ENCODE measurements at regions of chr9 and their contacts with region 1.

Region 1: DNA sequence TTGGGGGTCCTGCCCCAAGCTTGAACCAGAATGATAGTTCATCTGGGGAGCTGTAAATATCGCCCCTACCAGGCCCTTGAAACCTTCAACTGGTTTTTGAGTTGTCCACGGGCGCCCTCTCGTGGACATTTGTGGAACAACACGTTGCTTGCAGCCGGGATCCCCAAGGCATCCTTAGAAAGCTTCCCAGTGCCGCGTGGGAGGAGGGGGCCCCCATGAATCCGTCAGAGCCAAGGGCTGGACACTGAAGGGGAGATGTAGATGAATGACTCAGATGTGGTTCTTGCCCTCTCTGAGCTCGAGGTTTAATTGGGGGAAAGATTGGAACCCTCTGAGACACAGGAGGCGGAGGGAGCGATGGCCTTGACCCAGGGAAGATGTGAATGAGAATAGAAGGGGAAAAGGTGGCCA is 31.8 kb upstream of the ORM1 start:
- DNase-seq: no peak
- H3K4me3 ChIP-seq: no peak overlapping the region
- CTCF ChIP-seq: peak; percentile 74

Region 2: GRCh38 chr9:114082017-114082762 is 208.9 kb before region 1 on chr9:
- CTCF ChIA-PET with region 1: interaction called, 176 read pairs
- POLR2A ChIA-PET with region 1: no interaction called
- DNase-seq: peak; percentile 41
- H3K4me3 ChIP-seq: no peak overlapping the region
- CTCF ChIP-seq: peak; percentile 85

Region 3: DNA sequence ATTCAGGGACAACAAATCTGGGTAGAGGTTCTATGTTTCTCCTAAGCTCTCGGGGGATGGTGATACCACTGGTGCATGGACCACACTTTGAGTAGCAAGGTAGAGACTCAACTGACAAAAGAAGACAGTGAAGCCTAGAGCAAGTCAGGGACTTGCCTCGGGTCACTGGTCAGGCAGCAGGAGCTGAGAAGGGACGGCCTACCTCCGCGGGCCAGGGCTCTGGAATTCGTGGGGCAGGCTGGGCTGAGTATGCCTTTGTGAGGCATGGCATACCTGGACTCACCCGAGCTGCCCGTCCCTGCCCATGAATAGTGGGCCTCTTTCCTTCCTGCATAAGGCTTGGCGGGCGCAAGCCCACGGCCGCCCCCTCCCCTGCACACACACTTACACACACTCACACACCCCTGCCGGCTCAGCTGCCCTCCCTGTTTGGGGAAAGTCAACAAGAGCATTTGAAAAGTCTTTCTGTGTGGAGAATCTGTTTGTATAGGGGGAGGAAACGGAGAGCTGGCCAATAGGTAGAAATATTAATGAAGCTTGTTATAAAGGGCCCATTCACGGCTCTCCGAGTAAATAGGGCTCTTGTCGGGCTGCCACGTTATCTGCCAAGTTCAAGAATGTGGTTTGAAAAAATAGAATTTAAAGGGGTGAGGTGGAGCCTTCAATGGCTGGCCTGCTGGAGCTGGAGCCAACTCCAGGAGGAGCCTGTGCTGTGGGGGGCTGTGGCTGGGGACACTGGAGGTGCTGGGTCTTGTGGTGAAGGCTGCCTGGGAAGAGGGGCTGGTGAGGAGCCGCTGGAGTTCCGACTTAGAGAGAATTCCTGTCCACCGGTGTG is 172.9 kb before region 1 on chr9:
- CTCF ChIA-PET with region 1: interaction called, 686 read pairs
- POLR2A ChIA-PET with region 1: no interaction called
- DNase-seq: no peak
- H3K4me3 ChIP-seq: no peak overlapping the region
- CTCF ChIP-seq: no peak

Region 4: DNA sequence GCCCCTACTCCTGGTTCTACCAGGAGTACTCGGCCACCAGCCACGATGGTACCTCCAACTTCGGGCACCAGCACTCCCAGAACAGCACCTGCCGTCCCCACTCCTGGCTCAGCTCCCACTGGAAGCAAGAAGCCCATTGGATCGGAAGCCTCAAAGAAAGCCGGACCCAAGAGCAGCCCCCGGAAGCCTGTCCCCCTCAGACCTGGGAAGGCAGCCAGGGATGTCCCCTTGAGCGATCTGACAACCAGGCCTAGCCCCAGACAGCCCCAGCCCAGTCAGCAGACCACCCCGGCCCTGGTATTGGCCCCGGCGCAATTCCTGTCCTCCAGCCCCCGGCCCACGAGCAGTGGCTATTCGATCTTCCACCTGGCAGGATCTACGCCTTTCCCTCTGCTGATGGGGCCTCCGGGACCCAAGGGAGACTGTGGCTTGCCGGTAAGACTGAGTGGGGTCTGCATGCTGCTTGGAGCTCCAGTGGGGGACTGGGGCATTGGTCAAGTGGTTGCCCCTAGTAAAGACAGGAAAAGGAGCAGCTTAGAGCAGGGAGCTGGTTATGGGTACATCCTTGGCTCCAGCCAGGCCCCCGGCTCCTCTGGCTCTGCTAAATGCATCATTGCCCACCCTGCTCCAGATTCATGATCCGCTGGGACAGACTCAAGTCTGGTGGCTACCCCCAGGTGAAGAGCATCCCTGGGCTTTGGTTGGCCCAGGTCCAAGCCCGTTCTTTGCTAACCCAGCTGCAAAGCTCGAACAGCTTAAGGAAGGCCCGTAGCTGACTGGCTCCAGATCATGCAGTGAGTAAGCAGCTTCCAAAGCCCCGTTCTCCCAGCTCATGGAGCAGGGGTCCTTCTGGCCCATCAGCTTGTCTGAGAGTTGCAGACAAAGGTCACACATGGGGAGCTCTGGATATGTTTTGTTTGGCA is 121.8 kb before region 1 on chr9:
- CTCF ChIA-PET with region 1: interaction called, 280 read pairs
- POLR2A ChIA-PET with region 1: no interaction called
- DNase-seq: no peak
- H3K4me3 ChIP-seq: no peak overlapping the region
- CTCF ChIP-seq: no peak

Region 5: DNA sequence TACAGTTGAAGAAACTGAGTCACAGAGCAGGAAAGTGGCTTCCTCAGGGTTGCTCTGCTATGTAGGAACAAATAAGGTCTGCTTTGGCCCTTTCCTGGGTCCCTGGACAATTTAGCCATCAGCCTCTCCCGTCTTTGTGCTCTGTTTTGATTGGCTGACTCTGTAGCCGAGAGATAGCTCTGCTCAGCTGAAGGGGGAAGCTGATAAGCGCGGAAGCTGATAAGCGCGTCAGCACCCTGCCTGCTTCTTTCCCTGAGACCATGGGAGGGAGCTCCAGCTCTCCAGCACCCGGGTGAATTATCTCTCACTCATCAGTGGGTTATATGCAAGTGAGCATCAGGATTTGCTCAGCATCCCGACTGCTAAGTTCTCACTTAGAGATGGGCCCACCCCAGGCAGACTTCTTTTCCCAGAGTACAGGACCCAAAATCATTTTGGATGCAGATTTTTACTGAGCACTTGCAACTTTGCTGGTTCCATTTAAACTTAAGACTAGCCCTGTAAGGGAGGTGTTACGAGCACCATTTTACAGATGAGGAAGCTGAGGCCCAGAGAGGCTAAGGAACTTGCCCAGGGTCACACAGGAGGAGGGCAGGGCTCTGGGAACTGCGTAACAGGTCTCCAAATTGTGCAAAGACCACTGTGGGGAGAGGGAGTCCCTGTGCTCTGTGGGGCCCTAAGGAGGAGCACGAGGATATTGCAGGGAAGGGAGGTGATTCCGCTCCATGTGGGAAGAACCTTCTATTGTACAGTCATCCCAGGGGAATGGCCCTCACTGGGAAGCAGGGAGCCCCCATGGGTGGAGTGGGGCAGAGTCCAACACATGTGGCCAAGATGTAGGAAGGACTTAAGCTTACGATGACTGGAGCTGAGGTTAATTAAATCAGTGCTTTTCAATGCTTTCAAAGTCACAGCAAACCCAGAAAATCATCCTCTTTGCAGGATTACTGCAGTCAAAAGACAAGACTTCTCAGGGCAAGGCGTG is 51.9 kb before region 1 on chr9:
- CTCF ChIA-PET with region 1: interaction called, 49 read pairs
- POLR2A ChIA-PET with region 1: no interaction called
- DNase-seq: no peak
- H3K4me3 ChIP-seq: no peak overlapping the region
- CTCF ChIP-seq: peak; percentile 61

Region 6: DNA sequence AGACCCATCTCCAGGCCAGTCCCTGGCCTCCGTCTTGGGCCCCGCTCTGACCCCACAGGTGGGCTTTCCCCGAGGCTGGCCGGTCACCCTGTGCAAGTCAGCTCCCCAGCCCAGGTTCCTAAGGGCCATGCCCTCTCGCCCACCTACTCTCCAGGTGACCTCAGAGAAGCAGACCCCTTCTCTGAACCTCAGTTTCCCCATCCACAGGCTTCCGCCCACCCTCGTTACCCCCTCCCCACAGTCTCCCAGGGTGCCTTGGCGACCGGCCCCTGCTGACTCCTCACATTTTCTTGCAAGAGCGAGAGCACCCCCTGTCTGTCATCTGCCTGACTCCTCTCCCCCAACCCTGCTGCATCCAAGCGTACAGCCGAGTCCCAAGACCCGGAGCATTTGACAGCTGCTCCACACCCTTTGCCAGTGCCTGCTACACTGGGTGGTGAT is 19.4 kb before region 1 on chr9:
- CTCF ChIA-PET with region 1: interaction called, 10 read pairs
- POLR2A ChIA-PET with region 1: no interaction called
- DNase-seq: no peak
- H3K4me3 ChIP-seq: no peak overlapping the region
- CTCF ChIP-seq: peak; percentile 48

Measured in AG04449 (cell line).